Sigmoid colon (tissue), 7 donors: ENCODE measurements at regions of chr1 and their contacts with region 1.

Region 1: GRCh38 chr1:156212833-156213643 is at the start of gene PMF1:
- DNase-seq: peak; percentile 99
- H3K4me3 ChIP-seq: peak within 1 kb of the TSS; percentile 53 to 69 (median 62)
- H3K27ac ChIP-seq: peak within 1 kb of the TSS; percentile 85 to 95 (median 94)
- H3K4me1 ChIP-seq: peaks cover 0 to 22% (median 18%) of the 10 kb centered on the region in 4 donors
- H3K27me3 ChIP-seq: no peaks in the 10 kb centered on the region
- CTCF ChIP-seq: no peak
- EP300 ChIP-seq: no peak
- POLR2A ChIP-seq: peak; percentile 27 to 61
- total RNA-seq, gene PMF1: 41.1 to 61.2 (median 50.8) TPM

Region 2: GRCh38 chr1:155678027-155678426 is 535.0 kb before region 1 on chr1:
- intact Hi-C with region 1: no loop called
- DNase-seq: no peak
- H3K4me3 ChIP-seq: no peak overlapping the region
- H3K27ac ChIP-seq: no peak overlapping the region
- H3K4me1 ChIP-seq: peaks cover 0 to 17% (median 12%) of the 10 kb centered on the region in 4 donors
- H3K27me3 ChIP-seq: no peaks in the 10 kb centered on the region
- CTCF ChIP-seq: no peak
- EP300 ChIP-seq: no peak
- POLR2A ChIP-seq: no peak

Region 3: DNA sequence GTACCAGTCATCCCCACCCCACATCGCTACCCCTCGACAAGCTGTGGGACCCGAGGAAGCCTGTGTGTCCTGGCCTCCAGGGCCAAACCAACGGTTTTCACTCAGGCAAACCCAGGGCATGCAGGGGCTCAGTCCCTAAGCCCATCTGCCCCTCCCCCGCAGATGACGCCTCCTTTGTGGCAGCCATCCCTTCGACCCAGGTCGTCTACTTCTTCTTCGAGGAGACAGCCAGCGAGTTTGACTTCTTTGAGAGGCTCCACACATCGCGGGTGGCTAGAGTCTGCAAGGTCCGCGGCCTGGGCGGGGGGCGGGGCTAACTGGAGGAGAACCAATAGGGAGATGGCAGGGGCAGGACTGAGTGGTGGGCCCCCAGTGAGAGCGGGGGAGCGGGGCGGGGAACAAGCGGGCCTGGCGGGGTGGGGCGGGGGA is 52.3 kb before region 1 on chr1:
- intact Hi-C with region 1: loop called (anchors 5 kb)
- DNase-seq: peak; percentile 95
- H3K4me3 ChIP-seq: peak overlapping the region in 3 of 4 donors; percentile 48 to 61 (median 56)
- H3K27ac ChIP-seq: peak overlapping the region; percentile 68 to 85 (median 72)
- H3K4me1 ChIP-seq: peaks cover 0 to 17% (median 10%) of the 10 kb centered on the region in 4 donors
- H3K27me3 ChIP-seq: no peaks in the 10 kb centered on the region
- CTCF ChIP-seq: no peak
- EP300 ChIP-seq: no peak
- POLR2A ChIP-seq: no peak